AG04449 (cell line): ENCODE measurements at regions of chr11 and their contacts with region 1.

Region 1: GRCh38 chr11:119356349-119357031 is 10.0 kb upstream of the MFRP start:
- DNase-seq: no peak
- H3K4me3 ChIP-seq: peak overlapping the region; percentile 69
- CTCF ChIP-seq: peak; percentile 98

Region 2: GRCh38 chr11:119334174-119334930 is 22.1 kb before region 1 on chr11 and contains the start of gene RNF26:
- CTCF ChIA-PET with region 1: interaction called, 158 read pairs
- POLR2A ChIA-PET with region 1: interaction called, 11 read pairs
- DNase-seq: peak; percentile 88
- H3K4me3 ChIP-seq: peak within 1 kb of the TSS; percentile 97
- CTCF ChIP-seq: no peak

Region 3: GRCh38 chr11:119373921-119374631 is 17.6 kb after region 1 on chr11:
- CTCF ChIA-PET with region 1: interaction called, 141 read pairs
- POLR2A ChIA-PET with region 1: interaction called, 3 read pairs
- DNase-seq: peak; percentile 12
- H3K4me3 ChIP-seq: no peak overlapping the region
- CTCF ChIP-seq: peak; percentile 96

Region 4: GRCh38 chr11:119403021-119403420 is 46.5 kb after region 1 on chr11:
- CTCF ChIA-PET with region 1: interaction called, 10 read pairs
- POLR2A ChIA-PET with region 1: no interaction called
- DNase-seq: no peak
- H3K4me3 ChIP-seq: no peak overlapping the region
- CTCF ChIP-seq: no peak

Region 5: GRCh38 chr11:119432484-119433357 is 76.2 kb after region 1 on chr11:
- CTCF ChIA-PET with region 1: interaction called, 18 read pairs
- POLR2A ChIA-PET with region 1: interaction called, 4 read pairs
- DNase-seq: no peak
- H3K4me3 ChIP-seq: peak overlapping the region; percentile 48
- CTCF ChIP-seq: no peak

Region 6: DNA sequence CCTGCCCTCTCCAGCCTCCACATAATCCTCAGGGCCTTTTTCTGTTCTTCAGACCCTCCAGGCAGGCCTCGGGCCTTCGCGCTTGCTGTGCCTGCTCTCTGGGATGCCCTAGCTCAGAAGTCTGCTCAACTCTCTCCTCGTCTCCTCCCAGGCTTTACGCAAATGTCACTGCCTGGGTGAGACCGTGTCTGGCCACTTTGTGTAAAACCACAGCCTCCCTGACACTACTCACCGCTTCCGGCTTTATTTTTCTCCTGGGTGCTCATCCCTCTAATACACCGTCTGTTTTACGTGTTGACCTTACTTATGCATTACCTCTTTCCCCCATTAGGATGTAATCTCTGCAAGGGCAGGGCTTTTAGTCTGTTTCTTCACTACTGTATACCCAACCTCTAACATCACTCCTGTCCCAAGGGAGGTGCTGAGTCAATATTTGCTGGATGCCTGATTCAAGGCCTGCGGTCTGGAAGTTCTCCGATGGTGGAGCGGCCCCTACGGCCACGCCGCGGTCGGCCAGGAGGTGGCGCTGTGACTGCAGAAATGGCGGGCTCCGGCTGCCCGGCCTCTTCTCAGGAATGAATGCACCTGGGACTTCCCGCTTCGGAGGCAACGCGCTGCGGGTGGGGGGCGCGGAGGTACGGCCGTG is 124.7 kb after region 1 on chr11:
- CTCF ChIA-PET with region 1: interaction called, 365 read pairs
- POLR2A ChIA-PET with region 1: no interaction called
- DNase-seq: peak; percentile 90
- H3K4me3 ChIP-seq: no peak overlapping the region
- CTCF ChIP-seq: peak; percentile 95